Activated CD4-positive, alpha-beta T cell treated with anti-CD3 and anti-CD28 coated beads for 36 hours (primary cell): ENCODE measurements at regions of chr11 and their contacts with region 1.

Region 1: DNA sequence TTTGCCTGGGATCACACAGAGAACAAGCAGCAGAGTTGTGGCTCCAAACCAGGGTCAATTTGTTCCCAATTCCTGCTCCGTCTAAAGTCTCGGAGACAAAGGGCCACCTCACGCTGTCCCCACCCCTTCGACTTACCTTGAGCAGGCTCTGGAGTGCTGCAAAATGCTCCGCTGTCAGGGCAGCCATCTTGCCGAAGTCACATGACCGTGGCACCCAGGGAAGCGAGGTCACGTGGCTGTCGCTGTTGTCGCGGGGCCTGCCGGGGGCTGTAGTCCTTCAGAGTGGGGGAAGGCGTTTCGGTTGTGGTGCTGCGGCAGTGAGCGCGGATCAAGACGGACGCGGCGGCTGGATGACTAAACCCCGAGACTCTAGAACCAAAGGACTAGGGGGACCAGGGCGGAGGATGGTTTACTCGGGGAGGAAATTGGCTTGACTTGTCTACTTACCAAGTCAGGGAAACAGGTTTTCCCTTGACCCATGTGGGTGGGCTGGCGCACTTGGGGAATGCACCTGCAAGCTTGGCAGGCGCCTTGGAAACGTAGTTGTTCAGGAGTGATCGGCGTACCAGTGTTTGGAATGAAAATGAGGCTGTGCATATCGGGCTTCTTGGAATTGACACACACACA is at the start of gene COMMD9:
- DNase-seq: peak; percentile 98
- ATAC-seq: peak; percentile 99
- H3K4me3 Mint-ChIP-seq: peak within 1 kb of the TSS; percentile 83
- H3K27ac Mint-ChIP-seq: peak within 1 kb of the TSS; percentile 90
- H3K4me1 Mint-ChIP-seq: peaks cover 34% of the 10 kb centered on the region
- H3K27me3 Mint-ChIP-seq: no peaks in the 10 kb centered on the region
- total RNA-seq, gene COMMD9: 33.0 to 44.6 TPM

Region 2: GRCh38 chr11:35192347-35192746 is 1097.0 kb before region 1 on chr11:
- CTCF ChIA-PET with region 1: no interaction called
- POLR2A ChIA-PET with region 1: no interaction called
- intact Hi-C with region 1: no loop called
- DNase-seq: no peak
- ATAC-seq: no peak
- H3K4me3 Mint-ChIP-seq: no peak overlapping the region
- H3K27ac Mint-ChIP-seq: peak overlapping the region; percentile 35
- H3K4me1 Mint-ChIP-seq: peaks cover 89% of the 10 kb centered on the region
- H3K27me3 Mint-ChIP-seq: no peaks in the 10 kb centered on the region

Region 3: GRCh38 chr11:35662649-35663407 is 626.5 kb before region 1 on chr11 and contains the start of gene TRIM44:
- CTCF ChIA-PET with region 1: no interaction called
- POLR2A ChIA-PET with region 1: no interaction called
- intact Hi-C with region 1: loop called (anchors 2 to 5 kb)
- DNase-seq: peak; percentile 92
- ATAC-seq: peak; percentile 86
- H3K4me3 Mint-ChIP-seq: peak within 1 kb of the TSS; percentile 83
- H3K27ac Mint-ChIP-seq: peak within 1 kb of the TSS; percentile 97
- H3K4me1 Mint-ChIP-seq: peaks cover 41% of the 10 kb centered on the region
- H3K27me3 Mint-ChIP-seq: peaks cover under 1% of the 10 kb centered on the region
- total RNA-seq, gene TRIM44: 38.1 to 39.9 TPM

Region 4: DNA sequence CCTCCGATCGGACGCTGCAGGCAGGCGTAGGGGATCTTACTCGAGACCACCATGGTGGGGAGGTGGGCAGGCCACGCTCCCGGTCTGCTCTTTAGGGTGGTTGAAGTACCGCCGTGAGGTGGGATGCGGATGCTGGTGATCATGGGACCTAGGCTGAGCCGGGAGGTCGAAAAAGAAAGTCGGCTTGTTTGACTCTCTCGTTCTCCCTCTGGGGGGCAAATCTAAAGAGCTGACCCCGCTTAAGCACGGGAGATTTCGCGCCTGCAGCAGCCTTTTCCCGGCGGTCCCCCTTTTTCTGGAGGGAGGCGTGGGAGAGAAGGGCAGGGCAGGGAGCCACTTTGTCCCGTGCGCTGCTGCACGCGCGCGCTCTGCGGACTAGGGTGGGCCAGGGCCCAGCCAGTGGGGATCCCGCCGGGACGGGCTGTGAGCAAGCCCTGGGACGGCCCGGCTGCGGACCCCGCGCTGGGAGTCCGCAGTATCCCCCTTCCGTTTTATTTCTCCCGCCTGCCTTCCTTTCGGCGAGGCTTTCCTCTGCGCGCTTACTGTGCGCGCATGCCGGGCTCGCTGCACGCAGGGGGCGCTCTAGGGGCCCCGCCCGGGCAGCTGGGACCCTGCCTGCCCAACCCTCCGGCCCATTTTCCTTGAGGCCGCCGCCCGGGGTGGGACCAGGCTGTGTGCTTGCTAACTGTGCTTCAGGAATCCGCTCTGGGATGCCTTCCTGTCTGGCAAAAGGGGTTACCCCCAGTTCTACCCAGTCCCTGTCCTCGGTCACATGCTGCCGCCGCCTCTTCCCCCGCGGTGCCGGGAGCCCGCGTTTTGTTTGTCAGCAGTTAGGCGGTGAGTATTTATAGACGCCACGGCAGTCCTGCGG is 87.8 kb after region 1 on chr11:
- CTCF ChIA-PET with region 1: interaction called, 8 read pairs
- POLR2A ChIA-PET with region 1: no interaction called
- intact Hi-C with region 1: loop called in 1 of 2 experiments (anchors 1 kb)
- DNase-seq: peak; percentile 79
- ATAC-seq: peak; percentile 74
- H3K4me3 Mint-ChIP-seq: peak overlapping the region; percentile 92
- H3K27ac Mint-ChIP-seq: peak overlapping the region; percentile 84
- H3K4me1 Mint-ChIP-seq: peaks cover 33% of the 10 kb centered on the region
- H3K27me3 Mint-ChIP-seq: peaks cover 38% of the 10 kb centered on the region

Region 5: GRCh38 chr11:36478700-36479329 is 189.5 kb after region 1 on chr11:
- CTCF ChIA-PET with region 1: interaction called, 121 read pairs
- POLR2A ChIA-PET with region 1: no interaction called
- intact Hi-C with region 1: loop called (anchors 1 to 2 kb)
- DNase-seq: peak; percentile 54
- ATAC-seq: peak; percentile 44
- H3K4me3 Mint-ChIP-seq: no peak overlapping the region
- H3K27ac Mint-ChIP-seq: no peak overlapping the region
- H3K4me1 Mint-ChIP-seq: peaks cover 6% of the 10 kb centered on the region
- H3K27me3 Mint-ChIP-seq: no peaks in the 10 kb centered on the region

Region 6: GRCh38 chr11:36509694-36510566 is 220.6 kb after region 1 on chr11 and contains the start of gene TRAF6:
- CTCF ChIA-PET with region 1: interaction called, 8 read pairs
- POLR2A ChIA-PET with region 1: no interaction called
- intact Hi-C with region 1: loop called (anchors 1 kb)
- DNase-seq: peak; percentile 95
- ATAC-seq: peak; percentile 95
- H3K4me3 Mint-ChIP-seq: peak within 1 kb of the TSS; percentile 95
- H3K27ac Mint-ChIP-seq: peak within 1 kb of the TSS; percentile 88
- H3K4me1 Mint-ChIP-seq: peaks cover 32% of the 10 kb centered on the region
- H3K27me3 Mint-ChIP-seq: peaks cover 5% of the 10 kb centered on the region
- total RNA-seq, gene TRAF6: 11.1 to 12.5 TPM

Region 7: DNA sequence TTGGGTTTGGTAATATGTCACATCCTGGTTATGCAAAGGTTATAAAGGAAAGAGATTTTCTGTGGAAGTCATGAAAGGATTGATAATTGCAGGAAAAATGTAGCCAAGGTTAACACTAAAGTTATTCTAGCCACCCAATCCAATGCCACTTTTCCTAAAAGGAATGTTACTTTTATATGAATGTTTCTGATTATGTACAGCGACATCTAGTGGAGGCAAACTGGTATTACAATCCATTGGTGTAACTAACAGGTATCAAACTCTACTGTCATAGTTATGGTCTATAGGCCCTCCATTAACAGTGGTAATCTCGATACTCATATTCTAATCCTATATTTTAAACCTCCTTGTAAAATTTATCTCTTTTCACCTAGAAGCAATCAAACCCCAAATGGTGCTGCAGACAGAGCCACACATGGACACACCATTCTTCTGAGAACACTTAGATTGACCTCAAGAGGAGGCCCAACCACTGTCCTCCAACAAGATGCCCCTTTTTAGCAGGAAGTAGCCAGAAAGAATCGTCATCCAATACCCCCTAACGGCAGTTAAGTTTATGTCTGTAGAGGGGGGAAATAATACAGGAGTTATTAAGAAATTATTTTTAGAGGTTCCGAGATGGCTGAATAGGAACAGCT is 383.6 kb after region 1 on chr11:
- CTCF ChIA-PET with region 1: no interaction called
- POLR2A ChIA-PET with region 1: no interaction called
- intact Hi-C with region 1: loop called (anchors 2 to 5 kb)
- DNase-seq: no peak
- ATAC-seq: no peak
- H3K4me3 Mint-ChIP-seq: no peak overlapping the region
- H3K27ac Mint-ChIP-seq: no peak overlapping the region
- H3K4me1 Mint-ChIP-seq: no peaks in the 10 kb centered on the region
- H3K27me3 Mint-ChIP-seq: peaks cover 24% of the 10 kb centered on the region